ENCODE measurements at regions of chr1 and their contacts with region 1.

Region 1: DNA sequence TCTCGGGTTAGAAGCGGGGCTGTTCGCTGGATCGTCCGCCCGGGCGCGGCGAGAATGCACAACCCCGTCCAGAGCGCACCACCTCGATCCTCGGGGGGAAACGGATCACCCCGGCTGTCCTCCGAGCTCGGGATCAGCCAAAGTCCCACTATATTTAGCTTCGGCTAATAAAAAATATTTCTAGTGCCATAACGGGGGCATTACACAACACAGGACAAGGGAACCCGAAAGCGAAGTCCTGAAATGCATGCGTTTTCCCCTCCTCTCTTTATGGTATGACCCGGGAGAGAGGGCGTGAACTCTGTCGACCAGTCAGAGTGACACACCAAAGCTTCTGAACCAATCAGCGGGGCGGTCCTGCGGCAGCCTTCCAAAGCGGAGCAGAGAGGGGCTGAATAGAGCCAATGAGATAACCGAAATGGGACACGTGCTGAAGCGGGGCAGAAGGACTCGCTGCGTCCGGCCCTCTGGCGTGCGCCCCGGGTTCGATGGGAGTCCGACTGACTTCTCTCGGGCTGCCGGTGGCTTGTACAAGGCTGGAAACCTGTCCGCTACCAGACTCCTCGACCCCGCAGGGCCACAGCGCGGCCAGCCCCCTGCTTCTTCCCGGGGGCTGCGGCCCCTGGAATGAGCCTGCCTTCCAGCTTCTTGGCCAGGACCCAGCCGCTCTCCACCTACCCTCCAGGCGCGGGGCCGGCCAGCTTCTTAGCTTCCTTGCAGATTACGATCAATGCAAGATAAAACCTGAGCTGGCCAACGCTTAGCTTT is at the start of gene ALDH4A1:
- DNase-seq: peak; percentile 98
- H3K4me3 Mint-ChIP-seq: peak within 1 kb of the TSS; percentile 96
- H3K27ac Mint-ChIP-seq: peak within 1 kb of the TSS; percentile 97
- H3K4me1 Mint-ChIP-seq: peaks cover 27% of the 10 kb centered on the region
- H3K27me3 Mint-ChIP-seq: no peaks in the 10 kb centered on the region
- total RNA-seq, gene ALDH4A1: 2.8 and 5.2 TPM in 2 replicates

Region 2: DNA sequence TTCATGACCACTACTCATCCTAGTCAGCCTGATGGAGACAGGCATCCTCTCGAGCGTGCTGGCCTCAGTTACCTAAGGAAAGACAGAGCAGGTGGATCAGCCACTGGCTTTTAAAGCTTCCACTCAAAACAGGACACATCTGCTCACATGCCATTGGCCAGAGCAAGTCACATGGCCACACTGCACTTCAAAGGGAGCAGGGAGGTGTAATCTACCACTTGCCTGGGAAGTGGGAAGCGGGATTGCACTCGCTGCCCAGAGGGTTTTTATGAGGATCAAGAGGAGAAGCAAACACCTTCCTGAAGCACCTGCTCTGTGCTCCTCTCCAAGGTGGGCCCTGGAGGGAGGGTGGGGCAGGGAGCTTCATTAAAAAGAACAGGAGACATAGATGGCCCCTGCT is 151.3 kb before region 1 on chr1:
- intact Hi-C with region 1: no loop called
- DNase-seq: no peak
- H3K4me3 Mint-ChIP-seq: no peak overlapping the region
- H3K27ac Mint-ChIP-seq: no peak overlapping the region
- H3K4me1 Mint-ChIP-seq: no peaks in the 10 kb centered on the region
- H3K27me3 Mint-ChIP-seq: peaks cover 6% of the 10 kb centered on the region

Region 3: DNA sequence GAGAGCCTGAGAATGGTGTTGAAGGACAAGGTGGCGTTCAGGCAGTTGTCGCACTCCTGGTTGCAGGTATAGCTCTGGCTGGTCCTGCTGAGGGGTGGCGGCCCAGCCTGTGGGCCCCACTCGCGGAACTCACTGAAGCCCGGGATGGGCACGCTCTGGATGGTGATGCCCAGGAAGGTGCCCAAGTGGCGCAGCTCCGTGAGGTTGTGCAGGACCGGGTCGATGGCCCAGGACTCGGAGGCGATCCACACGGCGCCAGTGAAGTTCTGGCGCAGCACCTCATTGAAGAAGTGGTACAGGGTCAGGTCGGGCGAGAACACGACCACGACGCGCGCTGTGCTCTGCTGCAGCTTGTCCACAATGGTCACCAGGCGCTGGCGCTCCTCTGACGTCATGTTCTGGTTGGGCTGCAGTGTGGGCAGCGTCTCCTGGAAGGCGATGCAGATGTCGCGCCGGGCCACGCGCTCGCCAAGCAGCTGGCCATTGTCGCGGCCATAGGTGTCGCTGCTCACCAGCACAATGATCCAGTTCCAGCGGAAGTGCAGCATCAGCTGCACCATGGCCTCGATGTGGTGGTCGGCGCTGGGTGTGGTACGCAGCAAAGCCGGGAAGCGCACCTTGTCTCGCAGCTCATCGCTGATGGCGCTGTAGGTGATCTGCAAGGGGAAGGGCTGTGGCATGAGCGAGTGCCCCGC is 48.2 kb before region 1 on chr1:
- intact Hi-C with region 1: no loop called
- DNase-seq: no peak
- H3K4me3 Mint-ChIP-seq: no peak overlapping the region
- H3K27ac Mint-ChIP-seq: no peak overlapping the region
- H3K4me1 Mint-ChIP-seq: no peaks in the 10 kb centered on the region
- H3K27me3 Mint-ChIP-seq: no peaks in the 10 kb centered on the region

Region 4: DNA sequence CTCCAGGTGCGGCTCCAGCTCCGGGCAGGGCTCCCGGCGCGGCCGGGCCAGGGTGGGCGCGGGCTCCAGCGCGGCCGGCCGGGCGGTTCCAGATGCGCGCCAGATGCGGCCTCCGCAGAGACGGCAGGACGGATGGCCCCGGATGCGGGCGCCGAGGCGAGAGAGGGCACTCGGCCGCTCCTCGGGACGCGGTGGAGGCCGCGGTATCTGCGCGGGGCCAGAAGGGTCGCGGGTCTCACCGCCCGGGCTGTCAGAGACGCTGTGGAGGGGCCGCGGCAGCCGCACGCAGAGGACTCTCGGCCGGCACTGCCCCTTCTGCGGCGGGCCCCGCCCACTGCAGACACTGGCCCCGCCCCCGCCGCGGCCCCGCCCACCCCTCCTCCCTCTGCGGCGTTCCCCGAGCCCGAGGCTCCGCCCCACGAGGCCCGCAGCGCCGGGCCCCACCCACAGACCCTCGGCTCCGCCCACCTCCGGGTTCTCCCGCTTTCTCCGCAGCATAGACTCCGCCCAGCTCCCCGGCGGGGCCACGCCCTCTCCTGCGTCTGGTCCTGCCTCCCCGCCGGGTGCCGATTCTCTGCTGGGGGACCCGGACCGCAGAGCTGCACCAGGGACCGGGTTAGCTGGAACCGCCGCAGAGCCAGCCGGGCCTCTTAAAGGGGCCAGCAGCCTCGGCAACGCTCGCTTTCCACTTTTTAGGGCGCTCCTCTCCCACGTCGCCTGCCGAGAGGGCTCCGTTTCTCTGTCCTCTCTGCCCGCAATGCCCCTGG is 53.8 kb after region 1 on chr1 and contains the start of gene IFFO2:
- intact Hi-C with region 1: loop called (anchors 2 kb)
- DNase-seq: peak; percentile 100
- H3K4me3 Mint-ChIP-seq: peak within 1 kb of the TSS; percentile 88
- H3K27ac Mint-ChIP-seq: peak within 1 kb of the TSS; percentile 87
- H3K4me1 Mint-ChIP-seq: peaks cover 51% of the 10 kb centered on the region
- H3K27me3 Mint-ChIP-seq: peaks cover 21% of the 10 kb centered on the region
- total RNA-seq, gene IFFO2: 32.3 and 36.8 TPM in 2 replicates

Region 5: GRCh38 chr1:19074902-19075721 is 172.4 kb after region 1 on chr1:
- intact Hi-C with region 1: loop called (anchors 2 kb)
- DNase-seq: no peak
- H3K4me3 Mint-ChIP-seq: peak overlapping the region; percentile 59
- H3K27ac Mint-ChIP-seq: peak overlapping the region; percentile 72
- H3K4me1 Mint-ChIP-seq: peaks cover 30% of the 10 kb centered on the region
- H3K27me3 Mint-ChIP-seq: no peaks in the 10 kb centered on the region

Region 6: DNA sequence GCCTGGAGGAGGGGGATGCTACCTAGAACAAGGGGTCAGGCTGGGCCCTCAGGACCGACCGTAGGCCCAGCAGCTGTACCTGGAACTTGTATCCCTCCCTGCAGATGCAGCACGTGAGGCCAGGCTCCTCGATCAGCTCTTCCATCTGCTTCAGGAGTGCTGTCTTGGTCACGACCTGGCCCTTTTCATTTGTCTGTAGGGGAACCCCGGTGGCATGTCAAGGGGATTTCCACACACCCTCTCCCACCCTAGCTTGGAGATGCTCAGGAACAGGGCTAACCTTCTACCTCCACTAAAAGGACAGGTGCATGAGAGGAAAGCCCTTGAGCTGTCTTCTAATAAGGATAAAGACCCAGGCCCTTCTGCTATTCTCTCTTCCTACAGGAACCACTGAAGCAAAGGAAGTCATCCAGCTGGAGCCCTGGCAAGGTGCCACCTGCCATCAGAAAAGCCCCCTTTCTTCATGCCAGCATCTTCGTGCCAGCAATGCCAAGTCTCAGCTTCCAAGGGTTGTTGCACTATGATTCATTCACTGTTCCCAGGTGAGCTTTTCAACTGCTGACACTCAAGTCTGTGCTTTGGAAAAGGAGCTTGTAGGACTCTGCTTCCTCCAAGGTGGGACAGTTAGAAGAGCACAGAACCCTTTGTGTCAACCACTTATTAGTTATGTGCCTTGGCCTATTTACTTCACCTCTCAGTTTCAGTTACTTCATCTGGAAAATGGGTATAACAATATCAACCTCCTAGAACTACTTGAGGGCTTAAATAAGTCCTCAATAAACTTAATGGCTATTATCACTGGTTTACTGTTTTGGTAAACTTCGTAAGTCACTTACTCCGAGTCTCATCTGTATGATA is 185.3 kb after region 1 on chr1:
- intact Hi-C with region 1: loop called (anchors 5 kb)
- DNase-seq: peak; percentile 72
- H3K4me3 Mint-ChIP-seq: no peak overlapping the region
- H3K27ac Mint-ChIP-seq: peak overlapping the region; percentile 85
- H3K4me1 Mint-ChIP-seq: peaks cover 35% of the 10 kb centered on the region
- H3K27me3 Mint-ChIP-seq: no peaks in the 10 kb centered on the region

Measured in activated CD4-positive, alpha-beta T cell treated with anti-CD3 and anti-CD28 coated beads, Interleukin-2, amount 10 ng/mL, durations not matched to agents 24 days and 14 days (primary cell).